ENCODE measurements at regions of chr14 and their contacts with region 1.

Region 1: GRCh38 chr14:32252030-32252670 is 49.1 kb upstream of the RNU6-8 start:
- DNase-seq: peak in 1 of 2 experiments; percentile 53
- H3K4me3 ChIP-seq: no peak overlapping the region
- H3K27ac ChIP-seq: no peak overlapping the region
- H3K4me1 ChIP-seq: no peaks in the 10 kb centered on the region
- H3K27me3 ChIP-seq: no peaks in the 10 kb centered on the region
- CTCF ChIP-seq: peak; percentile 6 to 90 (median 84)
- EP300 ChIP-seq: no peak
- POLR2A ChIP-seq: no peak
- RAD21 ChIP-seq: peak; percentile 97 to 98

Region 2: DNA sequence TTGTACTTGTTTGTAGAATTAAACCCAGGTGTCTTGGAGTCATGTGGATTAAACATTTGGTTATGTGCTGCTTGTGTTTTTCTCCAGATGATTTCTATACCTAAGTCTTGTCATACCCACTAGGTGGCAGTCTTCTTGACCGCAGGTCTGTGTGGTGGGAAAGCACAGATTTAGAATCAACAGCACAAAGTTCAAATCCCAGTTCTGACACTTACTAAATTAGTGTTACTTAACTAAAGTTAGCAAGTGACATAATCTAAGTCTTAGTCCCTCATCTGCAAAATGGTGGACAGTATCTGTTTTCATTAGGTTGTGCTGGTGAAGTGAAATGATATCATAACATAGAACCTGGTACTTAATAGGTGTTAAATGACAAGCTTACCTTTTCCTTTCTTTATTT is 326.0 kb before region 1 on chr14:
- CTCF ChIA-PET with region 1: interaction called, 20 read pairs
- POLR2A ChIA-PET with region 1: no interaction called
- DNase-seq: no peak
- H3K4me3 ChIP-seq: no peak overlapping the region
- H3K27ac ChIP-seq: no peak overlapping the region
- H3K4me1 ChIP-seq: no peaks in the 10 kb centered on the region
- H3K27me3 ChIP-seq: no peaks in the 10 kb centered on the region
- CTCF ChIP-seq: peak in 2 of 3 experiments; percentile 67 to 69; a peak in 3 of 4 replicates
- EP300 ChIP-seq: no peak
- POLR2A ChIP-seq: no peak
- RAD21 ChIP-seq: peak; percentile 66 to 74

Region 3: GRCh38 chr14:32070282-32070681 is 181.9 kb before region 1 on chr14:
- CTCF ChIA-PET with region 1: interaction called, 18 read pairs
- POLR2A ChIA-PET with region 1: no interaction called
- DNase-seq: no peak
- H3K4me3 ChIP-seq: no peak overlapping the region
- H3K27ac ChIP-seq: no peak overlapping the region
- H3K4me1 ChIP-seq: no peaks in the 10 kb centered on the region; a peak in 1 of 7 replicates
- H3K27me3 ChIP-seq: no peaks in the 10 kb centered on the region
- CTCF ChIP-seq: no peak
- EP300 ChIP-seq: no peak
- POLR2A ChIP-seq: no peak
- RAD21 ChIP-seq: no peak

Region 4: DNA sequence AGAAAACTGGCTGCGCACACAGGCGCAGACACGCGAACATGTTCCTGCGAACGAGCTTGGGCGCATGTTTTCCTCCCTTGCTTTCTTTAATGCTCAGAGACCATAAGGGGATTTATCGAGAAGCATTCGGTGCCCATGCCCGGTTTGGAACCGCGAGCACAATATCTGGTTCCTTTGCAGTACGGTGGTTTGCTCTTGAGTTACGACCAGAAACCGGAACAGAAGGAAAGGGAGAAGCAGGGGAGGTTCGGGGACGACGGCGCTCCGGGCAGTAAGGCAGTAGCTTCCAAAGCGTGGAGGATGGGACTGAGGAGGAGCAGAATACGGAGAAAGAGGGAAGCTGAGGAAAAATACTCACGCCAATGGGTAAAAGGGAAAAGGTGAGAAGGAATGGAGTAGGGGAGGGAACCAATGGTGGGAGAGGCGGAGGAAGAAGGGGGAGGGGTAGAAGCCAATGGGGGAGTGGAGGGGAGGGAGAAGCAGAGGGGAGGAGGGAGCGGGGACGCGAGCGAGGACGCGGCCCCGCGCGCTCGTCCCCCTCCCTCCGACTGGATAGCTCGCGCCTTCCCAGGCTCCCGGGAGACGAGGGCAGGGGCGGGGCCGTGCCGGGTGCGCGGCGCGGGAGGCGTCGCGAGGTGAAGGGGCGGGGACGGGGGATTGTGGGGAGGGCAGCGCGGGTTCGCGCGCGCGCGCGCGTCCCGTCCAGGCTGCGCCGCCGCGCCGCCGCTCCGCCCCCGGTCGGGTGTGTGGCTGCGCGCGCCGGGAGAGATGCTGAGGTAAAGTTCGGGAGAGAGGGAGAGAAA is 175.7 kb before region 1 on chr14:
- CTCF ChIA-PET with region 1: interaction called, 18 read pairs
- POLR2A ChIA-PET with region 1: interaction called, 4 read pairs
- DNase-seq: peak; percentile 88 to 90
- H3K4me3 ChIP-seq: peak overlapping the region; percentile 79 to 97 (median 95)
- H3K27ac ChIP-seq: peak overlapping the region; percentile 88
- H3K4me1 ChIP-seq: peaks cover 0 to 4% (median 0%) of the 10 kb centered on the region in 4 experiments; a peak in 1 of 7 replicates
- H3K27me3 ChIP-seq: no peaks in the 10 kb centered on the region
- CTCF ChIP-seq: no peak
- EP300 ChIP-seq: peak in 1 of 2 experiments; percentile 31; a peak in 1 of 3 replicates
- POLR2A ChIP-seq: peak in 1 of 2 experiments; percentile 60; a peak in 1 of 3 replicates
- RAD21 ChIP-seq: 0 out of 4 replicates have a peak, but pooled peaks of 1 of the 2 experiments have one; percentile 1

Region 5: DNA sequence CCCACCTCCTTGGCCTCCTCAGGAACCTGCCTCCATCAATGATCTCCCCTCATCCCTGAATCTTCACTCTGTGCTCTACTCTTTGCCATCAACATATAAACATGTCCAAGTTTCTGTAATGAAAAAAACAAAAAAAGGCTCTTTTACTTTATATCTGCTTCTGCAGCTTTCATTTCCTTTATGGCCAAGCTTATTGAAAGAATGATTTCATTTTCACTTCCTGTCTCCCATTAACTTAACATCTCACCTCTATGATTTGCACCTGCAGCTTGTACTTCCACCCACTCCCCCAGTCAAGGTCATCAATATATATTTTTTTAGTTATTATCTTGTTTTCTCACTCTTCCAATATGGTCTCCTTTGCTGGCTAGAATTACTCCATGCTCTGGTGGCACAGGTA is 65.9 kb before region 1 on chr14:
- CTCF ChIA-PET with region 1: no interaction called
- POLR2A ChIA-PET with region 1: no interaction called
- DNase-seq: no peak
- H3K4me3 ChIP-seq: no peak overlapping the region
- H3K27ac ChIP-seq: no peak overlapping the region
- H3K4me1 ChIP-seq: no peaks in the 10 kb centered on the region
- H3K27me3 ChIP-seq: no peaks in the 10 kb centered on the region
- CTCF ChIP-seq: no peak
- EP300 ChIP-seq: no peak
- POLR2A ChIP-seq: no peak
- RAD21 ChIP-seq: no peak

Region 6: GRCh38 chr14:32263939-32264567 is 11.9 kb after region 1 on chr14:
- CTCF ChIA-PET with region 1: interaction called, 11 read pairs
- POLR2A ChIA-PET with region 1: no interaction called
- DNase-seq: no peak
- H3K4me3 ChIP-seq: no peak overlapping the region
- H3K27ac ChIP-seq: no peak overlapping the region
- H3K4me1 ChIP-seq: no peaks in the 10 kb centered on the region; a peak in 1 of 7 replicates
- H3K27me3 ChIP-seq: no peaks in the 10 kb centered on the region
- CTCF ChIP-seq: no peak
- EP300 ChIP-seq: no peak
- POLR2A ChIP-seq: no peak
- RAD21 ChIP-seq: no peak

Region 7: DNA sequence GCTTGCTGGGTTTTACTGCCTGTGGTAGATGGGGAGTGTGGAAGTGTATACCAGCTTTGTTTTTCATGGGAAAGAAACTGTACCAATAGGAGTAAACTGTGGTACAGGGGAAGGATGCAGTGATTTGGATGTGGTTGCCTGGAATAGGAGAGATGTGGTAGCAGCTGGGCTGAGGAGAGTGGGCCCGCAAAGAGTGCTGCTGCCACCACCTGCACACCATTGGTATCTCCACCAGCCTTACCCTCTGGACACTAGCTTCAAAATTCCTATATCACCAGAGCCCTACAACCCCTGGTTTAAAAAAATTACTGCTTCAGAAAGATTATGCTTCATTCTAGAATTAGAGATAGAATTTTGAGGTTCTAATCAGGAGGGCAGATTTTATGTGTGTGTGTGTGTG is 130.6 kb after region 1 on chr14:
- CTCF ChIA-PET with region 1: interaction called, 10 read pairs
- POLR2A ChIA-PET with region 1: no interaction called
- DNase-seq: no peak
- H3K4me3 ChIP-seq: no peak overlapping the region
- H3K27ac ChIP-seq: no peak overlapping the region
- H3K4me1 ChIP-seq: no peaks in the 10 kb centered on the region
- H3K27me3 ChIP-seq: no peaks in the 10 kb centered on the region
- CTCF ChIP-seq: peak; percentile 61 to 77 (median 76)
- EP300 ChIP-seq: no peak
- POLR2A ChIP-seq: no peak
- RAD21 ChIP-seq: peak; percentile 88

Region 8: GRCh38 chr14:32469388-32470160 is 217.4 kb after region 1 on chr14:
- CTCF ChIA-PET with region 1: interaction called, 10 read pairs
- POLR2A ChIA-PET with region 1: no interaction called
- DNase-seq: no peak
- H3K4me3 ChIP-seq: no peak overlapping the region
- H3K27ac ChIP-seq: no peak overlapping the region
- H3K4me1 ChIP-seq: peaks cover 0 to 9% (median 3%) of the 10 kb centered on the region in 4 experiments; a peak in 3 of 7 replicates
- H3K27me3 ChIP-seq: no peaks in the 10 kb centered on the region
- CTCF ChIP-seq: peak in 1 of 3 experiments; percentile 26; a peak in 2 of 4 replicates
- EP300 ChIP-seq: no peak
- POLR2A ChIP-seq: no peak
- RAD21 ChIP-seq: peak in 1 of 2 experiments; percentile 72; a peak in 3 of 4 replicates

Measured in H1 (cell line).